ENCODE measurements at regions of chr6 and their contacts with region 1.

Region 1: GRCh38 chr6:167350731-167351655 is 26.1 kb downstream of the TTLL2 start:
- DNase-seq: peak; percentile 76
- H3K4me3 ChIP-seq: peak overlapping the region in 2 of 3 experiments; percentile 23 to 33
- H3K27ac ChIP-seq: no peak overlapping the region
- H3K4me1 ChIP-seq: peaks cover 6% of the 10 kb centered on the region
- H3K27me3 ChIP-seq: peaks cover 0 to 5% of the 10 kb centered on the region in 2 experiments
- CTCF ChIP-seq: peak; percentile 83 to 86
- POLR2A ChIP-seq: no peak

Region 2: GRCh38 chr6:167268683-167269280 is 82.2 kb before region 1 on chr6:
- CTCF ChIA-PET with region 1: no interaction called
- POLR2A ChIA-PET with region 1: no interaction called
- dilution Hi-C with region 1: no loop called
- intact Hi-C with region 1: no loop called
- DNase-seq: no peak
- H3K4me3 ChIP-seq: no peak overlapping the region
- H3K27ac ChIP-seq: no peak overlapping the region
- H3K4me1 ChIP-seq: no peaks in the 10 kb centered on the region
- H3K27me3 ChIP-seq: no peaks in the 10 kb centered on the region
- CTCF ChIP-seq: no peak
- POLR2A ChIP-seq: no peak

Region 3: DNA sequence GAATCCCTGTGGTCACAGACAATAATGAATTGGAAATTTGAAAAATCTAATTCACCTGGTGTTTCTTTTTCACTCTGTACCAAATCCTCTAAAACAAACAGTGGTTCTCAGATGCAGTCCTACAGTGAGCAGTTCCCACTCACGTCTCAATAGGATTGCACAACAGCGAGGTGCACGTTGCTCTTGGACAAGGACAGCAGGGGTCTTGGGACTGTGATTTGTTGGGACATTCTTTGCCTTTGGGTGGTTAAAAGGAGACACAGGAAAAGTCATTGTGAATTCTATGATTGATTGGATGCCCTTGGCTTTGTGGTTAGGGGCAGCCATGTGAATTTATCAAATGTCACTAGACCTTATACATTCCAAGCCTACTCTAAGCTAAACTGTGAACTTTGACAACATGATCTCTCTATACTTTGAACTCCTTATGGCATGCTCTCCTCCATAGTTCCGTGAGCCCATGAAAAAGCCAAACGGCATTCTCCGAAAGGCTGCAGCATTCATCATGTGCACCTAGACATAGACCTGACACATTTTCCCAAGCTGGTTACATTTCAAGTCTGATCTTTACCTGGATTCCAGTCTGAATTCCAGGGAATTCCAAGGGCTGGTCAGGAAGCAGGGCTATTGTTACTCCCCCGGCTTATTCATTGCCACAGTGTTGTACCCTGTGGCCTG is 59.2 kb before region 1 on chr6:
- CTCF ChIA-PET with region 1: interaction called, 14 read pairs
- POLR2A ChIA-PET with region 1: no interaction called
- dilution Hi-C with region 1: no loop called
- intact Hi-C with region 1: loop called (anchors 2 kb)
- DNase-seq: no peak
- H3K4me3 ChIP-seq: no peak overlapping the region
- H3K27ac ChIP-seq: no peak overlapping the region
- H3K4me1 ChIP-seq: no peaks in the 10 kb centered on the region
- H3K27me3 ChIP-seq: no peaks in the 10 kb centered on the region
- CTCF ChIP-seq: no peak
- POLR2A ChIP-seq: no peak

Measured in endothelial cell of umbilical vein (primary cell).